ENCODE measurements at regions of chr9 and their contacts with region 1.

Region 1: GRCh38 chr9:112361601-112362000 is 18.3 kb upstream of the HSDL2 start:
- DNase-seq: no peak
- ATAC-seq: peak in 5 of 8 donors; percentile 46 to 56 (median 52)
- H3K4me3 ChIP-seq: no peak overlapping the region
- H3K27ac ChIP-seq: no peak overlapping the region
- H3K4me1 ChIP-seq: peaks cover 0 to 3% (median 0%) of the 10 kb centered on the region in 9 donors
- H3K27me3 ChIP-seq: no peaks in the 10 kb centered on the region
- CTCF ChIP-seq: peak; percentile 39 to 73 (median 60)

Region 2: GRCh38 chr9:112061152-112061740 is 300.4 kb before region 1 on chr9:
- intact Hi-C with region 1: no loop called
- DNase-seq: peak; percentile 24 to 63
- ATAC-seq: peak; percentile 70 to 93 (median 86)
- H3K4me3 ChIP-seq: no peak overlapping the region
- H3K27ac ChIP-seq: peak overlapping the region in 9 of 10 donors; percentile 62 to 91 (median 78)
- H3K4me1 ChIP-seq: peaks cover 0 to 90% (median 29%) of the 10 kb centered on the region in 9 donors
- H3K27me3 ChIP-seq: no peaks in the 10 kb centered on the region
- CTCF ChIP-seq: no peak

Region 3: GRCh38 chr9:112086627-112087026 is 275.0 kb before region 1 on chr9:
- intact Hi-C with region 1: loop called in 6 of 10 experiments (anchors 2 to 5 kb)
- DNase-seq: no peak
- ATAC-seq: no peak
- H3K4me3 ChIP-seq: no peak overlapping the region
- H3K27ac ChIP-seq: no peak overlapping the region
- H3K4me1 ChIP-seq: peaks cover 0 to 6% (median 0%) of the 10 kb centered on the region in 9 donors
- H3K27me3 ChIP-seq: no peaks in the 10 kb centered on the region
- CTCF ChIP-seq: peak; percentile 13 to 77 (median 63)

Region 4: GRCh38 chr9:112091810-112092209 is 269.8 kb before region 1 on chr9:
- intact Hi-C with region 1: loop called (anchors 2 to 5 kb)
- DNase-seq: no peak
- ATAC-seq: peak in 2 of 8 donors; percentile 51 to 60
- H3K4me3 ChIP-seq: no peak overlapping the region
- H3K27ac ChIP-seq: no peak overlapping the region
- H3K4me1 ChIP-seq: peaks cover 0 to 28% (median 0%) of the 10 kb centered on the region in 9 donors
- H3K27me3 ChIP-seq: no peaks in the 10 kb centered on the region
- CTCF ChIP-seq: peak in 7 of 9 donors; percentile 28 to 55 (median 40)

Region 5: GRCh38 chr9:112097712-112098688 is 263.6 kb before region 1 on chr9:
- intact Hi-C with region 1: loop called in 6 of 10 experiments (anchors 5 kb)
- DNase-seq: peak; percentile 32 to 54
- ATAC-seq: peak in 7 of 8 donors; percentile 78 to 88 (median 86)
- H3K4me3 ChIP-seq: no peak overlapping the region
- H3K27ac ChIP-seq: no peak overlapping the region
- H3K4me1 ChIP-seq: peaks cover 0 to 48% (median 0%) of the 10 kb centered on the region in 9 donors
- H3K27me3 ChIP-seq: no peaks in the 10 kb centered on the region
- CTCF ChIP-seq: peak; percentile 76 to 94 (median 88)

Region 6: GRCh38 chr9:112112941-112113681 is 248.5 kb before region 1 on chr9:
- intact Hi-C with region 1: loop called in 1 of 10 experiments (anchors 5 kb)
- DNase-seq: no peak
- ATAC-seq: peak in 1 of 8 donors; percentile 56
- H3K4me3 ChIP-seq: no peak overlapping the region
- H3K27ac ChIP-seq: no peak overlapping the region
- H3K4me1 ChIP-seq: no peaks in the 10 kb centered on the region
- H3K27me3 ChIP-seq: no peaks in the 10 kb centered on the region
- CTCF ChIP-seq: peak in 7 of 9 donors; percentile 14 to 44 (median 26)